ENCODE measurements at regions of chr1 and their contacts with region 1.

Region 1: DNA sequence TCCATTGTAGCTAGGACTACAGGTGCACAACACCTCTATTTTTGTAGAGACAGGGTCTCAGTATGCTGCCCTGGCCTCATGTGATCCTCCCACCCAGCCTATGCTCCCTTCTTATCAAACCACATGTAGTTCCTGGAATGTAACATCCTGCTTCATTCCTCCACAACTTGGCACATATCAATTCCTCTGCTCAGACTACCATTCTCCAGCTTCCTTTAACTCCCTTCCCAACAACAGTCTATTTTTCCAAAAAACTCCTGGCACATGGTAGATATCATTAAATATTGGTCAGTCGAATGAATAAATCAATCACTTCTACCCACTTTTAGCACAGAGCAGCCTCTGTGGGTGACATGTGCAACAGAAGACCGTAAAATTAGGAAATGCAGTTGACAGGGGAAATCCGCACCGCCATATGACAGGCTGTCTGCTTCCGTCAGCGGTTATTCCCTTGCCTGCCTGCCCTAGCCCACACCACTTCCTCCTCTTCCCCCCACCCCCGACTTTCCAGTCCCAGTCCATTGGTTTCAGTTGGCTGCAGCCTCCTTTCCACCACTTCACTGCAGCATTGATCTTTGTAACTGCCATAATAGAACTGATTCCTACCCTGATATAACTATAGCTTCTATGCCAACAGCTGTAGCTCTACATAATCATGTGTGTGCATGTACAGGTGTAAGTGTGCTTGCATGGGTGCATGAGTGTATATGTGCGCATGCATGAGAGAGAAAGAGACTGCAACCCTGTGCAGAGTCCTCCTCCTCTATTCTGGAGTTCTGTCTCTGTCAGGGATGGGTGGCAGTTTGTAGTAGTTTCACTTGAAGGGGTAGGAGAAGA is 6.8 kb upstream of the AKR1A1 start:
- DNase-seq: peak; percentile 23 to 91 (median 71)
- ATAC-seq: peak; percentile 94 to 98 (median 96)
- H3K4me3 ChIP-seq: no peak overlapping the region
- H3K4me3 Mint-ChIP-seq: peak overlapping the region in 2 of 3 donors; percentile 32 to 66
- H3K27ac ChIP-seq: peak overlapping the region; percentile 54
- H3K27ac Mint-ChIP-seq: peak overlapping the region; percentile 26 to 44
- H3K4me1 ChIP-seq: peaks cover 23 to 28% of the 10 kb centered on the region in 2 experiments
- H3K4me1 Mint-ChIP-seq: peaks cover 12 to 33% (median 27%) of the 10 kb centered on the region in 3 donors
- H3K27me3 ChIP-seq: peaks cover 0 to 2% of the 10 kb centered on the region in 2 experiments
- H3K27me3 Mint-ChIP-seq: no peaks in the 10 kb centered on the region

Region 2: GRCh38 chr1:45507195-45507594 is 36.6 kb before region 1 on chr1:
- CTCF ChIA-PET with region 1: no interaction called
- POLR2A ChIA-PET with region 1: interaction called in 1 of 2 experiments, 10 read pairs
- DNase-seq: no peak
- ATAC-seq: no peak
- H3K4me3 ChIP-seq: no peak overlapping the region
- H3K4me3 Mint-ChIP-seq: no peak overlapping the region
- H3K27ac ChIP-seq: no peak overlapping the region
- H3K27ac Mint-ChIP-seq: peak overlapping the region in 1 of 2 donors; percentile 57
- H3K4me1 ChIP-seq: no peaks in the 10 kb centered on the region
- H3K4me1 Mint-ChIP-seq: peaks cover 0 to 1% (median 0%) of the 10 kb centered on the region in 3 donors
- H3K27me3 ChIP-seq: no peaks in the 10 kb centered on the region
- H3K27me3 Mint-ChIP-seq: no peaks in the 10 kb centered on the region

Region 3: DNA sequence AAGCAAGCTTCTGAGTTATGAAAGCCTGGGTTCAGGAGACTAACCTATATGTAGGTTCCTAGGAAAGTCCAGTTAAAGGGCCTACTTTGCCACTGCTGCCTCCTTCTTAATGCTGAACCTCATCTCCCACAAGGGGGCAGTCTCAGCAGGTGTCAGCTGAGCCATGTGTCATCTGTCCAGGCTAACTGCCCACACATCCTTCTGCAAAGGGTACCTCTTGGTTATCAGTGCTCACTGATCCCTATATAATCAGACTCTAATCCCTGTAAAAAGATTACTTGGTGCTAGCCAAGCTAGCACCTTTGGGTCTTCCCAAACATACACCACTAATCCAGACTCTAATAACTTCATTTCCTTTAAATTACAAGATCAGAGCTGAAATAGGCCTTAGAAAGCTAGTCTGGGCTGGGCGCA is 31.2 kb before region 1 on chr1:
- CTCF ChIA-PET with region 1: interaction called, 4 to 10 read pairs
- POLR2A ChIA-PET with region 1: interaction called in 1 of 2 experiments, 10 read pairs
- DNase-seq: peak in 31 of 35 experiments; percentile 9 to 78 (median 37)
- ATAC-seq: peak; percentile 53 to 74 (median 70)
- H3K4me3 ChIP-seq: no peak overlapping the region
- H3K4me3 Mint-ChIP-seq: no peak overlapping the region
- H3K27ac ChIP-seq: no peak overlapping the region
- H3K27ac Mint-ChIP-seq: peak overlapping the region in 1 of 2 donors; percentile 66
- H3K4me1 ChIP-seq: peaks cover 0 to 5% of the 10 kb centered on the region in 2 experiments
- H3K4me1 Mint-ChIP-seq: peaks cover 1 to 9% (median 8%) of the 10 kb centered on the region in 3 donors
- H3K27me3 ChIP-seq: no peaks in the 10 kb centered on the region
- H3K27me3 Mint-ChIP-seq: no peaks in the 10 kb centered on the region

Measured in T-cell (primary cell).